OCI-LY7 (cell line): ENCODE measurements at regions of chr19 and their contacts with region 1.

Region 1: GRCh38 chr19:48970923-48971395 is 5.8 kb downstream of the FTL start:
- DNase-seq: peak; percentile 90
- H3K4me3 ChIP-seq: no peak overlapping the region
- H3K27ac ChIP-seq: no peak overlapping the region
- H3K4me1 ChIP-seq: peaks cover 41% of the 10 kb centered on the region
- CTCF ChIP-seq: peak; percentile 96

Region 2: GRCh38 chr19:48795055-48795684 is 175.8 kb before region 1 on chr19:
- CTCF ChIA-PET with region 1: interaction called, 3 read pairs
- POLR2A ChIA-PET with region 1: no interaction called
- intact Hi-C with region 1: loop called (anchors 2 kb)
- DNase-seq: peak; percentile 93
- H3K4me3 ChIP-seq: peak overlapping the region; percentile 68
- H3K27ac ChIP-seq: no peak overlapping the region
- H3K4me1 ChIP-seq: peaks cover 5% of the 10 kb centered on the region
- CTCF ChIP-seq: peak; percentile 99

Region 3: DNA sequence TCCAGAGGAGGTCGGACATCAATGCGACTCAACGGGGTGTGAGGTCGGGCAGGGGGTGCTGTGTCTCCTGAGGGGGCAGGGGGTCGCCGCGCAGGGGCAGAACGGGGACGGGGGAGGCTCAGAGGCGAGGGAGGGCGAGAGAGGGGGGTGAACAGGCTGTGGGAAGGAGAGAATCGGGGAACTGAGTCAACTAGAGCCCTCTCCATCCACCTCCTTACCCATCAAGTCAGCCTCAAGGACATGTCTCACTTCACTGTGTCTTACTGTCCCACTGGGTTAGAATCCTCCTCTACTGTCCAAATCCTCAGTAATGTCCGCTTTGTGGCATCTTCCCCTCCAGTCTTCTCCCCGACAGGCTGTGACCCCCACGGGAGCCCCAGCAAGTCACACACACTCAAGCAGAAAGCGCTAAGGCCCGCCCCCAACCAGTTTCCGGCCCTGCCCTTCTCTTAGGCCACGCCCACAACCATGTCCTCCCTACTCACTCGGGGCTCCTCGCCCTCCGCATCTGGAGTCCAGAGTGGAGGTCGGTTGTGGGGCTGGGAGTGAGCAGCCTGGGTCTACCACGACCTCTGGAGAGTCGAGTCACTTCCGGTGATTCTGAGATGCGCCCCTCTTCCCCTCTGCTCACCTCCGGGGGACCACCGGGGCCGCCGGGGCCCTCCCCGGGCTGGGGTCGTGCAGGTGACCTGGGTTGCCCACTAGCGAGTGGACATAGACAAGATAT is 111.8 kb before region 1 on chr19:
- CTCF ChIA-PET with region 1: no interaction called
- POLR2A ChIA-PET with region 1: no interaction called
- intact Hi-C with region 1: no loop called
- DNase-seq: peak; percentile 79
- H3K4me3 ChIP-seq: peak overlapping the region; percentile 52
- H3K27ac ChIP-seq: no peak overlapping the region
- H3K4me1 ChIP-seq: peaks cover 12% of the 10 kb centered on the region
- CTCF ChIP-seq: no peak